GM10248 (cell line): ENCODE measurements at regions of chr4 and their contacts with region 1.

Region 1: DNA sequence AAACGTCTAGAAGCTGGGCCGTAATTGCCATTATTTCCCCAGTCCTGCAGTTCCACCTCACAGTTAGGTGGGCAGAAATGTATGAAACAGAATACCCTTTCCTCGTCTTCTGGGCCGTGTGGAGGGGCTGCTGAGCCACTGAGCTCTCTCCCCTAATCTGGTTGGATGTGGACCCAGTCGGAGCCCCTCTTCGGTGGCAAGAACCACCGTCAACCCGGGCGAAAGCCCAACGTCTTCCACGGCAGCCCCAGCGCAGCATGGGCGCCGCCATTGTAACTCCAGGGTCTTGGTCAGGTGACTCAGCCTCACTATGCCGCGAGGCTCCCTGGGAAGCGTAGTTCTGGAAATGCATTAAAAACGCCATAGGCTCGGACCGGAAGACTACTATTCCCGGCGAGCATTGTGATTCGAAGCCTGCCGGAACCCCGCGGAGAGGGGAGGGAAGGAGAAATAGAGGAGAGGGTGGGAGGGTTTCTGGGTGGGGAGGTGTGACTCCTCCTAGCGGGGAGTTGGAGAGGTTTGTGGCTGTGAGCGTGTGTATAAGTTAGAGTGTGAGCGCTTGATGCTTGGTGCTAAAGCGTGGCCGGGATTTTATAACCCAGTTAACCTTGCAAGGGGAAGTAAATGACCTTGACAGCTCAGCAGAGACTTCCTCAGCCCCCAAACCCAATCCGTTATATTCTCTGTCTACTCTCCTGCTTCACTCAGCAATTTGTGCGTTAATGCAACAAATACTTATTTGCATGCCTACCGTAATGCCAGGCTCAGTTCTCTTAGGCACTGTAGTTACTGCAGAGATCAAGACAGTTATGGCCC is at the start of gene GATB:
- DNase-seq: peak; percentile 92
- CTCF ChIP-seq: peak; percentile 38

Region 2: GRCh38 chr4:151688003-151688784 is 72.7 kb before region 1 on chr4:
- CTCF ChIA-PET with region 1: no interaction called
- POLR2A ChIA-PET with region 1: no interaction called
- DNase-seq: no peak
- CTCF ChIP-seq: no peak

Region 3: GRCh38 chr4:151744614-151745013 is 16.3 kb before region 1 on chr4:
- CTCF ChIA-PET with region 1: interaction called, 16 read pairs
- POLR2A ChIA-PET with region 1: no interaction called
- DNase-seq: no peak
- CTCF ChIP-seq: no peak

Region 4: DNA sequence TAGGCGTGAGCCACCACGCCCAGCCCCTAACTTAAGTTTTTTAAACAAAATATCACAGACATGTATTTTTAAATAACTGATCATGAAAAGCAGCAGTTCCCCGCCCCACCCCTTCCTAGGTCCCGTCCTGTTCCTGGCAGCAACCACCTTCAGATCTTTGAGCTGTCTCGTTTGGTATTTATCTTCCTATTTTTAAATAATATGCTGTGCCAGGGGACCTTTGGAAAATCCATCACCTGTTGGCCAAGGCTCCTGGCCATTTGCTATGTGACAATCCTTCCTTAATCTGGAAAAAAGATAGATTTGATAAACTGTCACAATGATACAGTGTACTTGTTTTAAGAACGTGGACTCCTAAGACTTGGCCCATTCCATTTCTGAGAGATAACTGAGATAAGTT is 10.8 kb before region 1 on chr4:
- CTCF ChIA-PET with region 1: interaction called, 16 read pairs
- POLR2A ChIA-PET with region 1: no interaction called
- DNase-seq: no peak
- CTCF ChIP-seq: no peak

Region 5: GRCh38 chr4:151771664-151772063 is 10.7 kb after region 1 on chr4:
- CTCF ChIA-PET with region 1: interaction called, 10 read pairs
- POLR2A ChIA-PET with region 1: no interaction called
- DNase-seq: no peak
- CTCF ChIP-seq: no peak